Naive thymus-derived CD4-positive, alpha-beta T cell (primary cell): ENCODE measurements at regions of chr13 and their contacts with region 1.

Region 1: GRCh38 chr13:52011632-52012511 is at the start of gene ALG11:
- DNase-seq: peak; percentile 98 to 100 (median 99)
- ATAC-seq: peak; percentile 100
- H3K4me3 ChIP-seq: peak within 1 kb of the TSS; percentile 92
- H3K4me3 Mint-ChIP-seq: peak within 1 kb of the TSS; percentile 90 to 100 (median 99)
- H3K27ac ChIP-seq: peak within 1 kb of the TSS; percentile 76
- H3K27ac Mint-ChIP-seq: peak within 1 kb of the TSS; percentile 88 to 99 (median 95)
- H3K4me1 ChIP-seq: peaks cover 9 to 16% of the 10 kb centered on the region in 2 donors
- H3K4me1 Mint-ChIP-seq: peaks cover 19 to 45% (median 29%) of the 10 kb centered on the region in 7 donors
- H3K27me3 ChIP-seq: no peaks in the 10 kb centered on the region
- H3K27me3 Mint-ChIP-seq: peaks cover 14 to 38% (median 23%) of the 10 kb centered on the region in 5 donors
- total RNA-seq, gene ALG11: 29.3 to 45.6 (median 38.3) TPM

Region 2: GRCh38 chr13:50123862-50124536 is 1887.9 kb before region 1 on chr13:
- CTCF ChIA-PET with region 1: no interaction called
- POLR2A ChIA-PET with region 1: no interaction called
- intact Hi-C with region 1: loop called in 1 of 2 experiments (anchors 2 kb)
- DNase-seq: peak in 7 of 9 donors; percentile 46 to 88 (median 64)
- ATAC-seq: peak; percentile 82
- H3K4me3 ChIP-seq: peak overlapping the region; percentile 52
- H3K4me3 Mint-ChIP-seq: peak overlapping the region; percentile 86 to 96 (median 93)
- H3K27ac ChIP-seq: peak overlapping the region; percentile 95
- H3K27ac Mint-ChIP-seq: peak overlapping the region; percentile 90 to 99 (median 97)
- H3K4me1 ChIP-seq: peaks cover 24 to 29% of the 10 kb centered on the region in 2 donors
- H3K4me1 Mint-ChIP-seq: peaks cover 25 to 61% (median 50%) of the 10 kb centered on the region in 7 donors
- H3K27me3 ChIP-seq: peaks cover 0 to 11% of the 10 kb centered on the region in 2 donors
- H3K27me3 Mint-ChIP-seq: peaks cover 1 to 15% (median 12%) of the 10 kb centered on the region in 5 donors

Region 3: GRCh38 chr13:51814825-51815650 is 196.8 kb before region 1 on chr13:
- CTCF ChIA-PET with region 1: no interaction called
- POLR2A ChIA-PET with region 1: no interaction called
- intact Hi-C with region 1: loop called in 1 of 2 experiments (anchors 5 kb)
- DNase-seq: peak; percentile 40 to 81 (median 70)
- ATAC-seq: peak; percentile 84
- H3K4me3 ChIP-seq: peak overlapping the region; percentile 3
- H3K4me3 Mint-ChIP-seq: peak overlapping the region; percentile 44 to 100 (median 74)
- H3K27ac ChIP-seq: peak overlapping the region; percentile 85
- H3K27ac Mint-ChIP-seq: peak overlapping the region; percentile 61 to 99 (median 95)
- H3K4me1 ChIP-seq: peaks cover 21 to 75% of the 10 kb centered on the region in 2 donors
- H3K4me1 Mint-ChIP-seq: peaks cover 42 to 90% (median 86%) of the 10 kb centered on the region in 7 donors
- H3K27me3 ChIP-seq: no peaks in the 10 kb centered on the region
- H3K27me3 Mint-ChIP-seq: no peaks in the 10 kb centered on the region

Region 4: DNA sequence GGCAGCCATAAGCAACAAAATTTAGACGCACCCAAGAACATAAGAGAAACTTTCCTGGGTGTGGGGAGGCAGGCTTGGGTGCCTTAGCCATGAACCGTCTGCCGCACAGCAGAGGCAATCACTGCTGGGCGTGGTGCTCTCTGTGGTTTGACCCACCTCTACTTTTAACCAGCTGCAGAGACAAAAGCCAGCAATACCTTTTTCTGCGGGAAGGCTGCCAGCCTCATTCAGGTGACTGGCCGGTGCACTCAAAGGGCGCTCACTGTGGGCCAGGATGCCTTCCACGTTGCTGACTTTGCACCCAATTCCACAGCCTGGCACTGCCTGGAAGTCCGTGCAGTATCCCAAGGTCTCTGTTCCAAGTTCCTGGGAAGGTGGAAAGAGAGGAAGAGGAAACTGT is 69.7 kb before region 1 on chr13:
- CTCF ChIA-PET with region 1: no interaction called
- POLR2A ChIA-PET with region 1: no interaction called
- intact Hi-C with region 1: loop called in 1 of 2 experiments (anchors 1 kb)
- DNase-seq: peak in 7 of 9 donors; percentile 34 to 63 (median 57)
- ATAC-seq: peak; percentile 83
- H3K4me3 ChIP-seq: peak overlapping the region; percentile 52
- H3K4me3 Mint-ChIP-seq: peak overlapping the region; percentile 70 to 94 (median 88)
- H3K27ac ChIP-seq: peak overlapping the region; percentile 50
- H3K27ac Mint-ChIP-seq: peak overlapping the region; percentile 58 to 95 (median 84)
- H3K4me1 ChIP-seq: peaks cover 6 to 40% of the 10 kb centered on the region in 2 donors
- H3K4me1 Mint-ChIP-seq: peaks cover 33 to 64% (median 58%) of the 10 kb centered on the region in 7 donors
- H3K27me3 ChIP-seq: no peaks in the 10 kb centered on the region
- H3K27me3 Mint-ChIP-seq: peaks cover 0 to 34% (median 0%) of the 10 kb centered on the region in 5 donors

Region 5: DNA sequence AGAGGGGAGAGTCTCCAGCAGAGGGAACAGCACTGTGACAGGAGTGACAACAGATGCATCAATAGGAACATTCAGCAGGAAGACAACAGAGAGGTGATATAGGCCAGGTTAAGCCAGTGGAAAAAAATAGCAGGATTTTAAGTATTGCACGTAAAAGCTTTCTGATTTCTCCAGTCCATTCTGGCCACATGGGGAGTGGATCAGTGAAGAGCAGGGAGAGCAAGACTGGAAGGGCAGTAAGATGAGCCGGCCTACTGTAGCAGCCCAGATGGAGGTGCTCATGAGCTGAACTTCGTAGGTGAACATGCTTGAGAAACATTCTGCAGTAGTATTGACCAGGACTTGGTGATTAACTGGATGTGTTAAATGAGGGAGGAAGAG is 14.4 kb after region 1 on chr13:
- CTCF ChIA-PET with region 1: no interaction called
- POLR2A ChIA-PET with region 1: no interaction called
- intact Hi-C with region 1: loop called in 1 of 2 experiments (anchors 2 kb)
- DNase-seq: no peak
- ATAC-seq: no peak
- H3K4me3 ChIP-seq: no peak overlapping the region
- H3K4me3 Mint-ChIP-seq: peak overlapping the region in 5 of 10 donors; percentile 19 to 60 (median 49)
- H3K27ac ChIP-seq: no peak overlapping the region
- H3K27ac Mint-ChIP-seq: peak overlapping the region in 1 of 9 donors; percentile 47
- H3K4me1 ChIP-seq: no peaks in the 10 kb centered on the region
- H3K4me1 Mint-ChIP-seq: peaks cover 5 to 59% (median 40%) of the 10 kb centered on the region in 7 donors
- H3K27me3 ChIP-seq: no peaks in the 10 kb centered on the region
- H3K27me3 Mint-ChIP-seq: no peaks in the 10 kb centered on the region

Region 6: DNA sequence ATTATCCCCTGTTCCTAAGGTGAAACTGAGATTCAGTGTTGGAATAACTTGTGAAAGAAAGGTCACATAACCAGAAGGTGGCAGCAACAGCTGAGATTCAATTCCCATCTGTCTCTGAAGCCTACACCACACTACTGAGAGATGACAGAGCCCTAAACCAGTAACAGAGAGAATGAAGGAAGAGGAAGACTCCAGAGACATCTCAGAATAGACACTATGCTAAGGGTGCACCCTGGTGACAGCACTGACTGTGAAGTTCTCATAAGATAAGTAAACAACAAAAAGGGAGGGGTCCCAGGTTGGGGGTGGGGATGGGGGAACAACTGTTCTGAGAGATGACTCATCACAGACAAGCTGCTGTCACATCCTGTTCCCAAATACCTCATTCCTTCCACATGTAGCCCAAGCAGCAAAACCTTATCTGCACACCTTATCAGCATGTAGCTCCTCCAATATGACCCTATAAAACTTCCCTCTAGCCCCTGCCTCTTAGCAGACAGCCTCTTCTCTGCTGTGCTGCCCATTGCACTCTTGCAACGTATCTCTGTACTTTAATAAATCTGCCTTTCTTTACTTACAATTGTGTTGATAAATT is 59.2 kb after region 1 on chr13:
- CTCF ChIA-PET with region 1: no interaction called
- POLR2A ChIA-PET with region 1: no interaction called
- intact Hi-C with region 1: no loop called
- DNase-seq: peak in 1 of 9 donors; percentile 1
- ATAC-seq: no peak
- H3K4me3 ChIP-seq: no peak overlapping the region
- H3K4me3 Mint-ChIP-seq: no peak overlapping the region
- H3K27ac ChIP-seq: no peak overlapping the region
- H3K27ac Mint-ChIP-seq: no peak overlapping the region
- H3K4me1 ChIP-seq: no peaks in the 10 kb centered on the region
- H3K4me1 Mint-ChIP-seq: peaks cover 0 to 14% (median 0%) of the 10 kb centered on the region in 7 donors
- H3K27me3 ChIP-seq: no peaks in the 10 kb centered on the region
- H3K27me3 Mint-ChIP-seq: peaks cover 25 to 41% (median 27%) of the 10 kb centered on the region in 5 donors

Region 7: DNA sequence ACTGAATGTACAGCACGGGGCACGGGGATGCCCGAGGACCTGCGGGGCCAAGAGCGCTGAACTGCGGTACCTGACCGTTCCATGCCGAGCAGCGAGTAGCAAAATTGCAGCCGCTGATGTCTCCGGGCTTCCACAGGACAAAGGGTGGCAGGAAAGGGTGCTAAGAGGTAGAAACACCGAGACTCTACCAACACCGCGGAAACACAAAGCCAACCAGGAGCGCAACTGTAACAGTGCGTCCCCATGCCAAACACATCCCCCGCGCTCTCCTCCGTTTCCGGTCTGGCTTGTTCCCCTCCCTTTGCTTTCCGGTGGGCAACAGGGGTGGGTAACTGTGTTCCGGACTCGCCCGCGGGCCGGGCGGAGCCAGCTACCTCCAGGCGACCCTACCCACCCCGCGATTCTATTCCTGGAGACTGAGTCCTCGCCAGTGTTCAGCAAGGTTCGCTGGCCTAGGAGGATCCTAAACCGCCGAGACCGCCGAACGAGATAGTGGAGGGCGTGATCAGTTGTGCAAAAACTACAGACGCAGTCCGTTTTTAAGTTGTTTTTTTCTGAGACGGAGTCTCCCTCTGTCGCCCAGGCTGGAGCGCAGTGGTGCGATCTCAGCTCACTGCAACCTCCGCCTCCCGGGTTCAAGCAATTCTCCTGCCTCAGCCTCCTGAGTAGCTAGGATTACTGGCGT is 182.5 kb after region 1 on chr13:
- CTCF ChIA-PET with region 1: no interaction called
- POLR2A ChIA-PET with region 1: interaction called, 4 read pairs
- intact Hi-C with region 1: loop called (anchors 1 kb)
- DNase-seq: peak; percentile 77 to 92 (median 84)
- ATAC-seq: peak; percentile 94
- H3K4me3 ChIP-seq: peak overlapping the region; percentile 67
- H3K4me3 Mint-ChIP-seq: peak overlapping the region; percentile 88 to 99 (median 98)
- H3K27ac ChIP-seq: peak overlapping the region; percentile 78
- H3K27ac Mint-ChIP-seq: peak overlapping the region; percentile 90 to 98 (median 95)
- H3K4me1 ChIP-seq: no peaks in the 10 kb centered on the region
- H3K4me1 Mint-ChIP-seq: peaks cover 15 to 42% (median 37%) of the 10 kb centered on the region in 7 donors
- H3K27me3 ChIP-seq: no peaks in the 10 kb centered on the region
- H3K27me3 Mint-ChIP-seq: peaks cover 0 to 3% (median 0%) of the 10 kb centered on the region in 5 donors

Region 8: DNA sequence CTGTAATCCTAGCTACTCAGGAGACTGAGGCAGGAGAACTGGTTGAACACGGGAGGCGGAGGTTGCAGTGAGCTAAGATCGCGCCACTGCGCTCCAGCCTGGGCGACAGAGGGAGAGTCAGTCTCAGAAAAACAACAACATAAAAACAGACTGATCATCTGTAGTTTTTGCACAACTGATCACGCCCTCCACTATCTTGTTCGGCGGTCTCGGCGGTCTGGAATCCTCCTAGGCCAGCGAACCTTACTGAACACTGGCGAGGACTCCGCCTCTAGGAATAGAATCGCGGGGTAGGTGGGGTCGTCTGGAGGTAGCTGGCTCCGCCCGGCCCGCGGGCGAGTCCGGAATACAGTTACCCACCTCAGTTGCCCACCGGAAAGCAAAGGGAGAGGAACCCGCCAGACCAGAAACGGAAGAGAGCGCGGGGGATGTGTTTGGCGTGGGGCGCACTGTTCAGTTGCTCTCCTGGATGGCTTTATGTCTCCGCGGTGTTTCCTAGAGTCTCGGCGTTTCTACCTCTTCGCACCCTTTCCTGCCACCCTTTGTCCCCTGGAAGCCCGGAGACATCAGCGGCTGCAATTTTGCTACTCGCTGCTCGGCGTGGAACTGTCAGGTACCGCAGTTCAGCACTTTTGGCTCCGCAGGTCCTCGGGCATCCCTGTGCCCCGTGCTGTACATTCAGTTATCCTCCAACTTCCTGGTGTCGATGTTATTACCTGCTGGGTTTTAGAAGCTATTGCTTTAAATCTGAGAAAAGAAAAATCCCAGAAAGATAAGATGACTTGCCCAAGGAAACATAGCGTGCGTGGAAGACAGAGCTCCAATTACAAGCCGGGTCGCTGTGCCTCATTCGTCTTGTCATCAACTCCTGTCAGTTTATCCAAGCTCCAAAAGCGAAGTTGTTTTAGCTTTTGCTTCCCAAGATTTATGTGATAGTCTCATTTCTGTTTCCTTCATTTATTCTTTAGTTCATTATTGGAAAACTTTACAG is 605.5 kb after region 1 on chr13:
- CTCF ChIA-PET with region 1: no interaction called
- POLR2A ChIA-PET with region 1: no interaction called
- intact Hi-C with region 1: loop called (anchors 5 kb)
- DNase-seq: peak; percentile 61 to 85 (median 81)
- ATAC-seq: peak; percentile 97
- H3K4me3 ChIP-seq: peak overlapping the region; percentile 90
- H3K4me3 Mint-ChIP-seq: peak overlapping the region; percentile 86 to 100 (median 99)
- H3K27ac ChIP-seq: peak overlapping the region; percentile 76
- H3K27ac Mint-ChIP-seq: peak overlapping the region; percentile 95 to 97 (median 96)
- H3K4me1 ChIP-seq: peaks cover 0 to 13% of the 10 kb centered on the region in 2 donors
- H3K4me1 Mint-ChIP-seq: peaks cover 19 to 57% (median 39%) of the 10 kb centered on the region in 7 donors
- H3K27me3 ChIP-seq: no peaks in the 10 kb centered on the region
- H3K27me3 Mint-ChIP-seq: peaks cover 0 to 8% (median 0%) of the 10 kb centered on the region in 5 donors